Posterior vena cava (tissue), 2 donors: ENCODE measurements at regions of chr6 and their contacts with region 1.

Region 1: DNA sequence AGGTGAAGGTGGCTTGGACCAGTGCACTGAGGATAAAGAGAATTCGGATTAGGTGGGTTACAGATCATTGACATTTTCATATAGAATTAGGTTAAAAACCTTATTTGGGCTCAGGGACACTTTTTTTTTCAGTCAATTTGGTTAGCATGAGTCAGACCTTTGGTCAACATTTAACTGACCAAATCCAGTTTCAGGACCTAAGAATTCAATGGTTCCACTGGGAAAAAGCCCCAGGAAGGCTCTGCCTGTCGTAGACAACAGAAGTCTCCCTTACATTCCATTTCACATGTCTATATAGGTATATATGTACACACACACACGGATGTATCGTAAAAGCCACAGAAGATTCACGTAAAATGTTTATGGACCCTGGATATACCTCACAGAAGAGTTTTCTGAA is 184.2 kb upstream of the RREB1 start:
- DNase-seq: no peak

Region 2: DNA sequence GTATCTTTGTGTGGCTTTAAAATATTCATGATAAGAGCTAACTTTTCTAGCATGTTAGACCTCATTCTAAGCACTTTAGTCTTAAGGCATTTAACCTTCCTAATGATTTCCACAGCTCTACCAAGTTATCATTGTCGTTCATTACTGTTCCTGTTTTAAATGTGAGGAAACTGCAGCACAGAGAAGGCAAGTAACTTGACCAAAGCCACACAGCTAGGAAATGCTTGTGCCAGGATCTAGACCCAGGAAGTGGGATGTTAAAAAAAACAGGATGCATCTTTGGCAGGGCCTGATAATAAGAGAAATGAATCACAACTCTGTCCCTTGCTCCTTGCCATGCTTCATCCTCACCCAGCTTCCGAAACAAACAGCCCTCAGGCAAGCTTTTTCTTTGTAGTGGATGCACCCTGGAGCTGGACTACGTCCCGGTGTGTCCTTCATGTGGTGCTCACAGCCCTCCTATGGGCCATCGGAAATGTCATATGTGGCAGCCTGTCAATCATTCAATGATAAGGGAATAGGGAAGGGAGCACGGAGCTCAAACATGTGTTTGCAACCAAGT is 12.8 kb before region 1 on chr6:
- intact Hi-C with region 1: loop called in 1 of 2 experiments (anchors 1 kb)
- DNase-seq: no peak

Region 3: DNA sequence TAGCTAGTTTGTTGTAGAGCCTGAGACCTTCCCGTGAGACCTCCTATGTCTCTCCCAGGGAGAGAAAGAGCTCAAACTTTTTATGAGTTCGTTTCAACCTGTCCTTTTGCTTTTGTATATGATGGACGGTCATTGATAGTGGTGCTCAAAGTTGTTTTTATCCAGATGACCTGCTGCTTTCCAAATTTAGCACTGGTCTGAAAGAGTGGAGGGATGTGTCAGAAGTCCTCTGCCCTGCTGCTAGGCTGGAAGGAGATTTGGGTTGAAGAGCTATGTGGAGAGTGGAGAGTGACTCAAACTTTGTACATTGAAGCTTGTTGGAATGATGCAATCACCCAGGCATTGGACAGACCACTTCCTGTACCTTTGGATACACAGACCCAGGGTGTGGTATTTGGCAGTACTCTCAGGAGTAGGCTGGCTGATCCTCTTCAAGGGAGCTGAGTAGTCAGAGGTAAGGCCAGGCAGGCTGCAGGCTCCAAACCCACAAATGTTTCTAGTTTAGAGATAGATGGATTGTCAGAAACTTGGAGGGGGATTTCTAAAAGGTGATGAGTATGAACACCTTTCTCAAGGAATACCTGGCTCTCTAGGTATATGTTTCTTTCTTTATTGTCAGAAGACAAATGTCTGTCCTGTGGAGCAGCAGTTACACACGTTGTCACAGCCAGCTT is 134.8 kb after region 1 on chr6:
- intact Hi-C with region 1: no loop called
- DNase-seq: no peak